Activated B cell treated with CpG ODN at 0.5 μM for 24 hours (primary cell): ENCODE measurements at regions of chr9 and their contacts with region 1.

Region 1: DNA sequence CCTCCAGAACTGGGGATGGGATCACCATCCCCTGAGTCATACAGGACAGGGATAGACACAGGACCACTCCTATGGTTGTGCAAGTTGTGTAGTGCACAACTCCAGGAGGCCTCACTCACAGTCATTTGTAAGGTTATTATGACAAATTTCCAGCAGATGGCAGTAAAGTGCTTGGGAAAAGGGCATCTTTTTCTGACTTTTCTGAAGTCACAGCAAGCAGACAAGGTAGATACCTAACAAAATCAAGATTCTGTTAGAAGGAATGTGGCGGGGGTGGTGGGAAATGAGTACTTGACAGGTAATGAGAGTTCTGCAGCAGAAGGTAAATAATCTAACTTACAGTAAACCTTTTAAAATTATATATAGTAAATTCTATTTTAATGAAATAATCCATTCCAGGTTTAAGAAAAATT is 16.7 kb upstream of the KIF27 start:
- DNase-seq: no peak
- ATAC-seq: peak; percentile 57
- H3K4me3 Mint-ChIP-seq: no peak overlapping the region
- H3K27ac Mint-ChIP-seq: no peak overlapping the region
- H3K4me1 Mint-ChIP-seq: no peaks in the 10 kb centered on the region
- H3K27me3 Mint-ChIP-seq: no peaks in the 10 kb centered on the region
- CTCF ChIP-seq: no peak

Region 2: DNA sequence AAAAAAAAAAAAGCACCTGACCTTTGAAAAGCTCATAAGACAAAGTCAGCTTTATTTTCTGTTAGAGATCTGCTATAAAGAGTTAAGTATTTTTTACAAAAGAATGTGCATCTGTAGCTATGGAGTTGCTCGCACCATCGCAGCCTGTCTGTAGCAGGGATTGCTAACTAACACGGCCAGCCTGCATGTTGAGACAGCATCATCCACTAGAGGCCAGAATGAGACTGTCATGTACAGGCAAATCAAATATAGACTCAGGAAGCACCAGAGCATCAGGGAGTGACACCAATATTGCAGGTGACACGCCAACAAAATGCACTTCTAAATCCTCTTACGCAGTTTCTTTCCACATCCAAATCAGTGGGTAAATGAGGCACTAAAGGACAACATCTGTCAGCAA is 738.7 kb before region 1 on chr9:
- CTCF ChIA-PET with region 1: no interaction called
- POLR2A ChIA-PET with region 1: no interaction called
- intact Hi-C with region 1: no loop called
- DNase-seq: no peak
- ATAC-seq: no peak
- H3K4me3 Mint-ChIP-seq: no peak overlapping the region
- H3K27ac Mint-ChIP-seq: no peak overlapping the region
- H3K4me1 Mint-ChIP-seq: no peaks in the 10 kb centered on the region
- H3K27me3 Mint-ChIP-seq: peaks cover 9% of the 10 kb centered on the region
- CTCF ChIP-seq: no peak

Region 3: DNA sequence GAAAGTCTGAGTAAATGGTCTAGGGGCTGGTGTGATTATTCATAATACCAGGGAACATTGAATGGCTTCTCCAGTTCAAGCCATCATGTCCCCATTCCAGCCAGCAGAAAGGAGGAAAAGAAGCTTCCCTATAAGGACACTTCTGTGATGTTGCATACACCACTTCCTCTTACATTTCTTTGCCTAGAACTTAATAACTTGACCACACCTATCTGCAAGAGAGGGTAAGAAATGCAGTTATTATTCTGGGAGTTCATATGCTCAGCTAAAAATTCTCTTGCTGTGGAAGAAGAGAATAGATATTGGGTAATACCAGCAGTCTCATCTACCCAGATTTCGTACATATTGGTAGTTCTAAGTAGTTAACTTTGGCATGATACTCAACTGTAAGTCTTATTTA is 236.6 kb after region 1 on chr9:
- CTCF ChIA-PET with region 1: interaction called, 25 read pairs
- POLR2A ChIA-PET with region 1: no interaction called
- intact Hi-C with region 1: loop called (anchors 1 kb)
- DNase-seq: no peak
- ATAC-seq: no peak
- H3K4me3 Mint-ChIP-seq: no peak overlapping the region
- H3K27ac Mint-ChIP-seq: no peak overlapping the region
- H3K4me1 Mint-ChIP-seq: no peaks in the 10 kb centered on the region
- H3K27me3 Mint-ChIP-seq: peaks cover 4% of the 10 kb centered on the region
- CTCF ChIP-seq: no peak

Region 4: GRCh38 chr9:84261082-84261746 is 323.3 kb after region 1 on chr9:
- CTCF ChIA-PET with region 1: interaction called, 27 read pairs
- POLR2A ChIA-PET with region 1: no interaction called
- intact Hi-C with region 1: loop called (anchors 1 kb)
- DNase-seq: peak; percentile 27
- ATAC-seq: peak; percentile 40
- H3K4me3 Mint-ChIP-seq: peak overlapping the region; percentile 39
- H3K27ac Mint-ChIP-seq: no peak overlapping the region
- H3K4me1 Mint-ChIP-seq: peaks cover 6% of the 10 kb centered on the region
- H3K27me3 Mint-ChIP-seq: peaks cover 21% of the 10 kb centered on the region
- CTCF ChIP-seq: peak; percentile 72

Region 5: DNA sequence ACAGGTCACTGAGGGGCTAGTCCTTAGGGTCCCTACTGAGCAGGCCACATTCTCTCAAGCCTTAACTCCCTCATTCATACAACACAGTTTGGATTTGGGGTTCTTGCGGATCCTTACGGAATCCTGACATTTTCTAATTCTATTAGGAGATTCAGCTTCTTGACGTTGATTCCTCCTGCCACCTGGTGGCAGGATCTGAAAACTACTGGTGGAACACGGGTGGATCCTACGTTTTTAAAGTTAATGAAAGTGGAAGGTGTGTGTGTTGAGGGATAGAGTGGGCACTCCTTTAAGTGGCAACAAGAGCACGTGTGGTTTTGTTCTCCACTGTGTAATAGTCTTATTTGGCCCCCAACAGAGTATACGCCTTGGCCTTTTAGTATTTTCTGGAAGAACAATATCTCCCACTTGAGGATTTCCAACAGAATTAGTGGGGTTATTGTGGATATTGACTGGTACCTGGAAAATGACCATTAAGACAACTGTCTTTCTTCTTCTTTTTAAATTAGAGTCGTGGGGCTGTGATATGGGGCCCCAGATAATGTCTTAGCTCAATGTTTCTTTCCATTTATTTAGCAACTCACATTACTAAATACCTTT is 377.5 kb after region 1 on chr9:
- CTCF ChIA-PET with region 1: interaction called, 14 read pairs
- POLR2A ChIA-PET with region 1: no interaction called
- intact Hi-C with region 1: loop called (anchors 1 kb)
- DNase-seq: peak; percentile 22
- ATAC-seq: peak; percentile 42
- H3K4me3 Mint-ChIP-seq: no peak overlapping the region
- H3K27ac Mint-ChIP-seq: no peak overlapping the region
- H3K4me1 Mint-ChIP-seq: no peaks in the 10 kb centered on the region
- H3K27me3 Mint-ChIP-seq: peaks cover 2% of the 10 kb centered on the region
- CTCF ChIP-seq: no peak